ENCODE measurements at regions of chr15 and their contacts with region 1.

Region 1: DNA sequence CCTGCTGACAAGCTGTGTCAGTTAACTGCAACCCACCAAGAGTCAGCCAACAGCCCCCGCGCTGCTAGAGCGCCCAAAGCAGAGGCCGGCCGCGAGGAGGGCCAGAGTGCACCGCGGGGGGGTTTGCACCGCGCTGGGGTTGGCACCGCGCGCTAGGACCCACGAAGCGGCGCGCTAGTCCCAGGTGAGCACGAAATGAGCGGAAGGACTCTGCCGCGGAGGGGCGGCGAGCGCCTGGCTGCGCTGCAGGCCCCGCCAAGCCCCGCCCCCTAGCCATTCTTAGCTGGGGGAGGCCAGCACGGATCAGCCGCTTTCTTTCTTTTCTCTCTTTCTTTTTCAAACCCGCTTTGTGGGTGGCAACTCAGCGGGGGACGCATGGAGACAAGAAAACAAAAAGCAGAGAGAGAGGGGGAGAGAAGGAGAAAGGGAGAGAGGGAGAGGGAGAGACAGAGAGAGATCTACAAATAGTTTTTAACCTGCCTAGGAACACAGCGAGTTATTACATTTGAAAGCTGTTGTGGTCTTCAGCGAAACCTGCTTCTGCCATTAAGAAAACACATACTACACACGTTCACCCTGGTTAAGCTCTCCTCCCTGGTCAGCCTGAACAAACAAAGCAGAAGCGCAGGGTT is 6.9 kb upstream of the FOXB1 start:
- DNase-seq: peak; percentile 63
- H3K4me3 Mint-ChIP-seq: peak overlapping the region; percentile 79
- H3K27ac Mint-ChIP-seq: peak overlapping the region; percentile 27
- H3K4me1 Mint-ChIP-seq: peaks cover 73% of the 10 kb centered on the region
- H3K27me3 Mint-ChIP-seq: peaks cover 86% of the 10 kb centered on the region

Region 2: DNA sequence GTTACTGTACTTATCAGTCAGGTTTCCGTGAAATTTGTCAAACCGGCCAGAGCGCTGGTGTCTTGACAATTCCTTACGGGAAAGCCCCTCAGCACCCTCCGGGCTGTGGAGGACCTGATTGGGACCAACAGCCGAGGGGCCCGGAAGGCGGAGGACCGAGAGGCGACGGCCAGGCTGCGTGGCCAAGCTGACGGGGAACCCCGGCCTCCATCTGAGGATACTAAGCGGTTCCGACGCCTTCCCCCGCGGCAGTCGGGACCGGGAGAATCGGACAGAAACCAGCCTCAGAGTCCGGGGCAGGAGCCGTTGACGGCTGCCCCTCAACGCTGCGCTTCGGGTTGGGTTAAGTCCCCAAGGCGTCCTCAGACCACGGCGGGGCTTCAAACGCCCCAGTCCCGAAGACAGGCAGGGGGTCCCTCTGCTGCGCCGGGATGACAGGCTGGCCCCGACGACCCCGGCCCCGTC is 1932.2 kb before region 1 on chr15:
- intact Hi-C with region 1: loop called (anchors 5 kb)
- DNase-seq: no peak
- H3K4me3 Mint-ChIP-seq: no peak overlapping the region
- H3K27ac Mint-ChIP-seq: no peak overlapping the region
- H3K4me1 Mint-ChIP-seq: no peaks in the 10 kb centered on the region
- H3K27me3 Mint-ChIP-seq: peaks cover 68% of the 10 kb centered on the region

Region 3: GRCh38 chr15:59725172-59725486 is 272.1 kb before region 1 on chr15:
- intact Hi-C with region 1: loop called (anchors 10 kb)
- DNase-seq: no peak
- H3K4me3 Mint-ChIP-seq: no peak overlapping the region
- H3K27ac Mint-ChIP-seq: no peak overlapping the region
- H3K4me1 Mint-ChIP-seq: no peaks in the 10 kb centered on the region
- H3K27me3 Mint-ChIP-seq: peaks cover 20% of the 10 kb centered on the region

Region 4: GRCh38 chr15:59751552-59752413 is 245.4 kb before region 1 on chr15:
- intact Hi-C with region 1: loop called (anchors 5 kb)
- DNase-seq: no peak
- H3K4me3 Mint-ChIP-seq: no peak overlapping the region
- H3K27ac Mint-ChIP-seq: no peak overlapping the region
- H3K4me1 Mint-ChIP-seq: peaks cover 5% of the 10 kb centered on the region
- H3K27me3 Mint-ChIP-seq: peaks cover 12% of the 10 kb centered on the region

Region 5: DNA sequence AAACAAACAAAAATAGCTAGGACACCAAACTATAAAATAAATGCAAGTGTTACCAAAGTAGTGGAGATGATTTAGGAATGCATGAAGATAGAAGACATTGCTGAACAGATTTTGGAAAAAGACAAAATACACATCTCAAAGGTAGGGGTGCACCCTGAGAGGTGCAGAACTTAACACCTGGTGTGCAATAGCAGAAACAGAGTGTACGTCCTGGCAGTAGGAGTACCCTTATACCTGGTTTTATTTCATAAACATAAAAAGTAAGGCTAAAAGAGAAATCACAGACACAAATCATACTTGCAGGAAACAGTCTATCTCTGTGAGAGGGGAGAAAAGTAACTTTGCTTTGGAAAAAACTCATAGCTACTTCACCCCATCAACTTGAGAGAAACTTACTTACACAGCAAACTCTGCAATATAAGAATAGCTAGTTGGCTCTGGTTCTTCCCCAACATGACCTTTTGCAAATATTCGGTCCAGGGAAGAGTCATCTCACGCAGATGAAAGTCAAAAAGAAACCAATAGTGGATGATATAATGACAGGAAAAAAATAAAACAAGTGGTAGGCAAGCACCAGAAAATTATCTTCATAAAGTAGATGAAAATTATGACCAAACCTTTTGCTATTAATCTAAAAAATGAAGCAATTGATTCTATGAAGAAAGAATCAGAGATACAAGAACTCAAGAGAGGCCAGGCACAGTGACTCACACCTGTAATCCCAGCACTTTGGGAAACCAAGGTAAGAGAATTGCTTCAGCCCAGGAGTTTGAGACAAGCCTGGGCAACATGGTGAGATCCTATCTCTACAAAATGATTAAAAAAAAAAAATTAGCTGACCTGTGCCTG is 199.2 kb before region 1 on chr15:
- intact Hi-C with region 1: loop called (anchors 5 kb)
- DNase-seq: no peak
- H3K4me3 Mint-ChIP-seq: peak overlapping the region; percentile 10
- H3K27ac Mint-ChIP-seq: peak overlapping the region; percentile 49
- H3K4me1 Mint-ChIP-seq: peaks cover 52% of the 10 kb centered on the region
- H3K27me3 Mint-ChIP-seq: peaks cover 10% of the 10 kb centered on the region

Region 6: DNA sequence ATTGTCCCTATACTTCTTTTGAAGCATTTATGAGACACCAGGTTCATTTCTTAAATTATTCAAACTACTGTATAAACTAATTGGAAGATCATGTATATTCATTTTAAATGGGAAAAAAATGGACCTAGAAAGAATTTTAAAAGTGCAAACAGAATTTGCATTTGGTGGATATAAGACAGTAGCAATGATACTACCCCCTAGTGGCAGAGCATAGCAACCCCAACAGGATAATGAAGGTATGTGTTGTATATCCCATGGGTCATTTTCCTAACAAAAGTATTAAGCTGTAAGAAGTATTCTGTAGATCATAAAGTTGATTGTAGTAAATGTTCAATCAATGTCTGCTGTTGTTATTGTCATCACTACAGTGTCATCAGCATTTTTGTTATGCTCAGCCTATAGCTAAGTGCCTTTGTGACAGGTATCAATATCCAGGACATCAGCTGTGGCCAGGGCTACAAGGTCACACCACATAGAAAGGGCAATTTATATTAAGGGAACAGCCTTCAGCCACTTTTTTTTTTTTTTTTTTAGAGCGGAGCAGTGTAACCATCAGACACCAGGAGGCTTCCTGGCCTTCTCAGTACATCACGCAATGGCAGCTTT is 182.7 kb after region 1 on chr15:
- intact Hi-C with region 1: loop called (anchors 1 kb)
- DNase-seq: no peak
- H3K4me3 Mint-ChIP-seq: no peak overlapping the region
- H3K27ac Mint-ChIP-seq: no peak overlapping the region
- H3K4me1 Mint-ChIP-seq: no peaks in the 10 kb centered on the region
- H3K27me3 Mint-ChIP-seq: peaks cover 30% of the 10 kb centered on the region

Measured in activated T-helper 1 cell treated with anti-CD3 and anti-CD28 coated beads, Interleukin-12 subunit alpha, Interleukin-12 subunit beta, Interleukin-2, Interleukin-4 antibody, amounts not matched to agents 30 ng/mL and 10 ng/mL and 1 ng/mL, durations not matched to agents 14 hours and 24 hours and 36 hours (primary cell).